Activated T-helper 1 cell treated with anti-CD3 and anti-CD28 coated beads, Interleukin-12 subunit alpha, Interleukin-12 subunit beta, Interleukin-2, Interleukin-4 antibody, amounts not matched to agents 30 ng/mL and 10 ng/mL and 1 ng/mL, durations not matched to agents 14 hours and 24 hours and 36 hours (primary cell): ENCODE measurements at regions of chr7 and their contacts with region 1.

Region 1: DNA sequence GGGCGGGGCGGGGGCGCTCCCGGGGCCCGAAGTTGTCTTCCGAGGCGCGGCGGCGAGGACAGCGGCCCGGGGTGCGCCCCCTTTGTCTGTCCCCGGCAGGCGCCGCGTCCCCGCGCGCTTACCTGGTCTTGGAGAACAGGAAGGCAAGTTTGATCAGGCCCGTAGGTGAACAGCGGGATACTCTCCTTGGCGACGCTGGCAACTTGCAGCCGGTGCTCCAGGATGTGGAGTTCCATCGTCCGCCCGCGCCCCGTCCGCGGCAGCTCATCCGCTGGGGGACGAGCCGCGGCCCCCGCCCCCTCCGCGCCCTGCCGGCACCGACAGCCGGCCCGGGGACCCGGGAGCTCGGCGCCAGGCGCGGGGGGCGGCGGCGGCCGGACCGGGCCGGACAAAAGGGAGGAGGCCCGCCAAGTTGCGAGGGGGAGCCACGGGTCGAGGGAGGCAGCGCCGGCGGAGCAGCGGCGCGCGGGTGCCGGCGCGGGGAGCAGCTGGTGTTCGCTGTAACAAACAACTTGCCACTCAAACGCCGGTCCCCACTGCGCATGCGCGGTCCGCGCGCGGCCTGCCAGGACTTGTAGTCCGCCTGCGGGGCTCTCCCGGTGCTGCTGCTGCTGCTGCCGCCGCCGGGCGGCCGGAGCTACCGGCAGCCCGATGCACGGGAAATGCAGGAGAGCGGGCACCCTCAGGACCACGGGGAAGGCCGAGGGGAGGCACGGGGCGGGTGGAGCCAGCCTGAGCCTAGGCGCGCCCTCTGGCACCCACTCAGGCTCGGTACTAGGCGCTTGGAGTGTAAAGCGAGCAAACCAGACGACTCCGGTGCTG is 35.6 kb upstream of the SPDYE3 start:
- DNase-seq: peak; percentile 98
- H3K4me3 Mint-ChIP-seq: peak overlapping the region; percentile 77
- H3K27ac Mint-ChIP-seq: peak overlapping the region; percentile 55
- H3K4me1 Mint-ChIP-seq: peaks cover 14% of the 10 kb centered on the region
- H3K27me3 Mint-ChIP-seq: peaks cover 2% of the 10 kb centered on the region

Region 2: GRCh38 chr7:99551767-99552463 is 720.0 kb before region 1 on chr7 and contains the start of gene FAM200A:
- intact Hi-C with region 1: loop called (anchors 5 kb)
- DNase-seq: peak; percentile 75
- H3K4me3 Mint-ChIP-seq: peak within 1 kb of the TSS; percentile 90
- H3K27ac Mint-ChIP-seq: peak within 1 kb of the TSS; percentile 31
- H3K4me1 Mint-ChIP-seq: peaks cover 31% of the 10 kb centered on the region
- H3K27me3 Mint-ChIP-seq: no peaks in the 10 kb centered on the region
- total RNA-seq, gene FAM200A: 4.7 and 5.2 TPM in 2 replicates

Region 3: GRCh38 chr7:100158229-100159098 is 113.5 kb before region 1 on chr7 and contains the start of gene TRAPPC14:
- intact Hi-C with region 1: loop called (anchors 2 kb)
- DNase-seq: peak; percentile 89
- H3K4me3 Mint-ChIP-seq: peak within 1 kb of the TSS; percentile 81
- H3K27ac Mint-ChIP-seq: peak within 1 kb of the TSS; percentile 81
- H3K4me1 Mint-ChIP-seq: peaks cover 49% of the 10 kb centered on the region
- H3K27me3 Mint-ChIP-seq: no peaks in the 10 kb centered on the region
- total RNA-seq, gene TRAPPC14: 43.9 and 44.3 TPM in 2 replicates

Region 4: DNA sequence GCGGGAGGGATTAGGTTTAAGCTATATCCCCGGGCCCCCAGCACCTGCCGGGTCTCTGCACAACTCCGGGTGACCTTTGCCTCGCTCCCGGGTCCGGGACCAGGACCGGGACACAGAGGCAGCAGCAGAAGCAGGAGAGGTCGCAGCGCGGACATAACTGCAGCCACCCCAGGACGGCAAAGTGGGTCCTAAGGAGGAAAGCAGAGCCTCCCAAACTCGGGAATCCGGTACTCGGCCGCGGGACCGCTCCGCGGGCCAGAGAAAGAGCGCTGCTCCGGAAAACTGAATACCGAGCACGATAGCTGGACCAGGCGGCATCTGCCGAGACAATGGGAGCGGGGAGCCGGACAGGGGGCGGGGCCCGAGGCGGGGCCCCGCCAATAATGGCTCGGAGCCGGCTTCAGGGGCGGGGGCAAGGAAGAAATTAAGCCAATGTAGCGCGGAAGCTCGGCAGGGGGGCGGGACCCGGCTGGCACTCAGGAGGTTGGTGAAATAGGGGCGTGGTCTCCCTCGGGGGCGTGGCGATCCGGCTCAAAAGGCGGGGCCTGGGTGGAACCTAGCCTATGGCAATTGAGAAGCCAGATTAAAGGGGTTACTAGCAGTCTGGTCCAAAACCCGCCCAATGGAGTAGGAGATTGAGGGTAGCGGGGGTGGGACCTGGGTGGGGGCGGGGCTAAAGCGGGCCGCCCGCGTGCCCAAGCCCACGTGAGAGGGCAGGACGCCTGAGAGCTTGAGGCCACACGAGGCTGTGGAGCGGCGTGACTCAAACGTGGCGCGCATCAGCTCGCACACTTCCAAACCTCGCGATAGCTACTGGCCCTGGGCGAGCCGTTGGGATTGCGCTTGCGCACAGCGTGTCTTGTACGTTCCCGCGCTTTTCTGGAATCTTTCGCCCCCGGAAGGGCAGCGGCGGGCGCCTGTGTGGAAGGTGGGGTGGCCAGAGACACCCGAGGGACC is 94.6 kb before region 1 on chr7 and contains the starts of genes GPC2 and STAG3:
- intact Hi-C with region 1: no loop called
- DNase-seq: peak; percentile 97
- H3K4me3 Mint-ChIP-seq: peak within 1 kb of the TSS; percentile 82
- H3K27ac Mint-ChIP-seq: peak within 1 kb of the TSS; percentile 83
- H3K4me1 Mint-ChIP-seq: peaks cover 46% of the 10 kb centered on the region
- H3K27me3 Mint-ChIP-seq: peaks cover 15% of the 10 kb centered on the region
- total RNA-seq, gene GPC2: 3.9 and 4.8 TPM in 2 replicates
- total RNA-seq, gene STAG3: 25.0 and 30.6 TPM in 2 replicates

Region 5: GRCh38 chr7:100247152-100247757 is 24.7 kb before region 1 on chr7:
- intact Hi-C with region 1: no loop called
- DNase-seq: no peak
- H3K4me3 Mint-ChIP-seq: no peak overlapping the region
- H3K27ac Mint-ChIP-seq: no peak overlapping the region
- H3K4me1 Mint-ChIP-seq: peaks cover 7% of the 10 kb centered on the region
- H3K27me3 Mint-ChIP-seq: no peaks in the 10 kb centered on the region

Region 6: DNA sequence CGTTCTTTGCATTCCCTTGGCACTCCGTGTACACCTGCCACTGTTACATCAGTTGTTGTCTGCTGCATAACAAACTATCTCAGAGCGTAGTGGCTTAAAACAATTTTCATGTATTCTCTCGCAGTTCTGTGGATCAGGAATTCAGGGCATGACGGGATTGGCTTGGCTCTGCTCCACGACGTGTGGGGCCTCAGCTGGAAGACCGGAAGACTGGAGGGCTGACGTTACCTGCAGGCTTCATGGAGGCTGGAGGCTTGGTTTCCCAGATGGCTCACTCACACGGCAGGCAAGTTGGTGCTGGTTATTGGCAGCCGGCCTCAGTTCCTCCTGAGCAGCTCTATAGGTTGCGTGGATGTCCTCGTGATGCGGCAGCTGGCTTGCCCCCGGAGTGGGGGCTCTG is 237.3 kb after region 1 on chr7:
- intact Hi-C with region 1: no loop called
- DNase-seq: no peak
- H3K4me3 Mint-ChIP-seq: no peak overlapping the region
- H3K27ac Mint-ChIP-seq: no peak overlapping the region
- H3K4me1 Mint-ChIP-seq: no peaks in the 10 kb centered on the region
- H3K27me3 Mint-ChIP-seq: peaks cover 6% of the 10 kb centered on the region

Region 7: GRCh38 chr7:100867040-100867775 is 595.3 kb after region 1 on chr7 and contains the start of gene TRIP6:
- intact Hi-C with region 1: loop called (anchors 5 kb)
- DNase-seq: peak; percentile 43
- H3K4me3 Mint-ChIP-seq: peak within 1 kb of the TSS; percentile 91
- H3K27ac Mint-ChIP-seq: peak within 1 kb of the TSS; percentile 90
- H3K4me1 Mint-ChIP-seq: peaks cover 12% of the 10 kb centered on the region
- H3K27me3 Mint-ChIP-seq: peaks cover 2% of the 10 kb centered on the region
- total RNA-seq, gene TRIP6: 41.5 and 44.1 TPM in 2 replicates